ENCODE measurements at regions of chr15 and their contacts with region 1.

Region 1: GRCh38 chr15:43483306-43484128 is 9.4 kb downstream of the TP53BP1 start:
- DNase-seq: no peak
- H3K4me3 ChIP-seq: no peak overlapping the region
- H3K27ac ChIP-seq: no peak overlapping the region
- H3K4me1 ChIP-seq: no peaks in the 10 kb centered on the region
- H3K27me3 ChIP-seq: no peaks in the 10 kb centered on the region
- CTCF ChIP-seq: peak; percentile 30 to 37

Region 2: GRCh38 chr15:43510200-43511011 is 26.9 kb after region 1 on chr15:
- CTCF ChIA-PET with region 1: interaction called, 11 read pairs
- dilution Hi-C with region 1: no loop called
- in situ Hi-C with region 1: no loop called
- intact Hi-C with region 1: no loop called
- DNase-seq: peak; percentile 96
- H3K4me3 ChIP-seq: peak overlapping the region; percentile 59 to 83 (median 72)
- H3K27ac ChIP-seq: peak overlapping the region; percentile 69
- H3K4me1 ChIP-seq: peaks cover 10% of the 10 kb centered on the region
- H3K27me3 ChIP-seq: no peaks in the 10 kb centered on the region
- CTCF ChIP-seq: peak in 1 of 2 donors; percentile 13

Region 3: GRCh38 chr15:43541785-43542184 is 58.3 kb after region 1 on chr15:
- CTCF ChIA-PET with region 1: no interaction called
- dilution Hi-C with region 1: no loop called
- in situ Hi-C with region 1: no loop called
- intact Hi-C with region 1: no loop called
- DNase-seq: no peak
- H3K4me3 ChIP-seq: no peak overlapping the region
- H3K27ac ChIP-seq: no peak overlapping the region
- H3K4me1 ChIP-seq: no peaks in the 10 kb centered on the region
- H3K27me3 ChIP-seq: no peaks in the 10 kb centered on the region
- CTCF ChIP-seq: no peak